Lower leg skin (tissue), 4 donors: ENCODE measurements at regions of chr19 and their contacts with region 1.

Region 1: DNA sequence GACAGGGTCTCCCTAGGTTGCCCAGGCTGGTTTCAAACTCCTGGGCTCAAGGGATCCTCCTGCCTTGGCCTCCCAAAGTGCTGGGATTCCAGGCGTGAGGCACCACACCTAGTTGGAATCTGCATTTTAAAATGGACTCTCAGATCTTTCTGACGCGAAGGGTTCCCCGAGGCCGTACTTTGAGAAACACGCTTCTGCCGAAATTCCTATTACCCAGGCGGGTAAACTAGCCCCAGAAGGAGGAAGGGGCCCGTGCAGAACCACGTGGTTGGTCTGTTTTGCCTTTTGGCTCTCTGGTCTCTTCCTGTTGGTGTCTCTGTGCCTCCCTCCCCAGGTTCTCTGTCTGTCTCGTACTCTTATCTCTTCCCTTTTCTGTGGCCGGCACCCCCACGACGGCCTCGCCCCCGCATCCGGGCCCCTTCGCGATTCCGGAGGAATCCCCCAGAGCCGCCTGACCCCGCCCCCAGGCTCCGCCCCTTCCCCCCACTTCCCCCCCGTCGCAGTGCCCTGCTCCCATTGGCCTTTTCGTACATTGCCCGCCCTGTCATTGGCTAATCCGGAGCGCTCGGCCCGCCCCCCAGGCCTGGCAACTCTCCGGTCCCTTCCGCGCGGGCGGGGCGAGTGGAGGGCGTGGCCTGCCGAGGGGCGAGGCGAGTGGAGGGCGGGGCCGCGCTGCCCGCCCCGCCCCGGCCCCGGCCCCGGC is at the start of gene TNFAIP8L1:
- DNase-seq: peak; percentile 94 to 99
- H3K4me3 ChIP-seq: peak within 1 kb of the TSS; percentile 47
- CTCF ChIP-seq: no peak
- POLR2A ChIP-seq: no peak
- total RNA-seq, gene TNFAIP8L1: 3.1 to 11.6 (median 7.0) TPM

Region 2: GRCh38 chr19:4557971-4558941 is 80.7 kb before region 1 on chr19:
- intact Hi-C with region 1: loop called (anchors 5 kb)
- DNase-seq: no peak
- H3K4me3 ChIP-seq: no peak overlapping the region
- CTCF ChIP-seq: peak in 1 of 3 donors; percentile 50
- POLR2A ChIP-seq: no peak

Region 3: GRCh38 chr19:4571305-4571917 is 67.6 kb before region 1 on chr19:
- intact Hi-C with region 1: loop called (anchors 5 kb)
- DNase-seq: no peak
- H3K4me3 ChIP-seq: no peak overlapping the region
- CTCF ChIP-seq: no peak
- POLR2A ChIP-seq: no peak